ENCODE measurements at regions of chr1 and their contacts with region 1.

Region 1: GRCh38 chr1:204828338-204828850 is 42.3 kb upstream of the NFASC start:
- DNase-seq: peak; percentile 74
- ATAC-seq: peak; percentile 87
- H3K4me3 Mint-ChIP-seq: no peak overlapping the region
- H3K27ac Mint-ChIP-seq: no peak overlapping the region
- H3K4me1 Mint-ChIP-seq: peaks cover 4% of the 10 kb centered on the region
- H3K27me3 Mint-ChIP-seq: peaks cover 38% of the 10 kb centered on the region

Region 2: GRCh38 chr1:204673909-204674649 is 154.3 kb before region 1 on chr1:
- CTCF ChIA-PET with region 1: no interaction called
- POLR2A ChIA-PET with region 1: no interaction called
- intact Hi-C with region 1: no loop called
- DNase-seq: no peak
- ATAC-seq: no peak
- H3K4me3 Mint-ChIP-seq: no peak overlapping the region
- H3K27ac Mint-ChIP-seq: no peak overlapping the region
- H3K4me1 Mint-ChIP-seq: no peaks in the 10 kb centered on the region
- H3K27me3 Mint-ChIP-seq: no peaks in the 10 kb centered on the region

Region 3: GRCh38 chr1:204791453-204792353 is 36.7 kb before region 1 on chr1:
- CTCF ChIA-PET with region 1: interaction called, 11 read pairs
- POLR2A ChIA-PET with region 1: no interaction called
- intact Hi-C with region 1: no loop called
- DNase-seq: peak; percentile 93
- ATAC-seq: peak; percentile 96
- H3K4me3 Mint-ChIP-seq: no peak overlapping the region
- H3K27ac Mint-ChIP-seq: no peak overlapping the region
- H3K4me1 Mint-ChIP-seq: peaks cover 2% of the 10 kb centered on the region
- H3K27me3 Mint-ChIP-seq: peaks cover 21% of the 10 kb centered on the region

Region 4: DNA sequence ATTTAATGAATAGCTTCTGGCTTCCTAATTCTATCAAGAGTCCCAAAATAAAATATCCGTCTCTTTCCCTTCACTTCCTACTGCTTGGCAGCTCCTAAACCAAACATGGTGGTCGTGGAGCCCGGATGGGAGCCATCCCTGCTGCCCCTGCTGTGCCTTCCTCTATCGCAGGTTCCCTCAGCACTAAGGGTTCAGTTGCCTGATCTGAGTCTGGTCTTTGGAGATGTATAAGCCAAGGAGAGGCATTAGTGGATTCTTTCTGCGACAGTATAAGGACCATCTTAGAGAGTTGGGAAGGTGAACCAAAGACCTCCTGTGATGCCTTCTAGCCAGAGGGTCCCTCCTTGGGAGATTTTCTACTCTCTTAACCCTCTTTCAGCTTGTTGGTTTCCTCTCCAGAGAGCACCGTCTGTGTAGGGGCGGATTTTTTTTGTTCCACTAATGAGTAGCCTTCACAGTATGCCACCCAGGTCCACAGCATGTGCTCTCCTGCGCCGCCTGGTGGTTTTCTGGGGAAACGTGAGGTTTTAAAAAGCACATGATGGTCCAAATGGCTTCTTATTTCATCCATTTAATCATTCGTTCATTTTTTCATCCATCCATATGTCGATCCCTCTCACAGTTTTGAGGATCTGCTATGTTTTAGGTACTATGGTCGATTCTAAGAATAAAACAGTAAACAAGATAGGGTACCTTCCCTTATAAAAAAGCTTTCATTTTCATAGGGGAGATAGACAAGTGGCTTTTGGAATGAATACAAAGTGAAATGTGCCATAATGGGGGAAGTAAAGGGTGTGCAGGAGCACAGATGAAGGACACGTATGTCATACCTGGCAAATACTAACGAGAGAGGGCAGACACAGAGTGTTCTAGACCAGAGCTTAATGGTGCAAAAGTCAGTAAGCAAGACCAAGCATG is 113.3 kb after region 1 on chr1:
- CTCF ChIA-PET with region 1: interaction called, 3 read pairs
- POLR2A ChIA-PET with region 1: no interaction called
- intact Hi-C with region 1: loop called (anchors 1 to 5 kb)
- DNase-seq: peak; percentile 82
- ATAC-seq: peak; percentile 74
- H3K4me3 Mint-ChIP-seq: no peak overlapping the region
- H3K27ac Mint-ChIP-seq: no peak overlapping the region
- H3K4me1 Mint-ChIP-seq: no peaks in the 10 kb centered on the region
- H3K27me3 Mint-ChIP-seq: peaks cover 5% of the 10 kb centered on the region